ENCODE measurements at regions of chrX and their contacts with region 1.

Region 1: GRCh38 chrX:136162831-136163570 is 15.7 kb downstream of the FHL1 start:
- DNase-seq: peak; percentile 42
- H3K4me3 ChIP-seq: no peak overlapping the region
- H3K27ac ChIP-seq: no peak overlapping the region
- H3K4me1 ChIP-seq: peaks cover 1% of the 10 kb centered on the region
- CTCF ChIP-seq: peak; percentile 74

Region 2: GRCh38 chrX:136268051-136269048 is 105.3 kb after region 1 on chrX:
- CTCF ChIA-PET with region 1: no interaction called
- POLR2A ChIA-PET with region 1: no interaction called
- intact Hi-C with region 1: loop called (anchors 5 kb)
- DNase-seq: peak; percentile 63
- H3K4me3 ChIP-seq: no peak overlapping the region
- H3K27ac ChIP-seq: no peak overlapping the region
- H3K4me1 ChIP-seq: peaks cover 33% of the 10 kb centered on the region
- CTCF ChIP-seq: peak; percentile 84

Measured in OCI-LY7 (cell line).